ENCODE measurements at regions of chr1 and their contacts with region 1.

Region 1: GRCh38 chr1:184563308-184563707 is 176.5 kb downstream of the C1orf21 start:
- DNase-seq: no peak
- H3K4me3 ChIP-seq: no peak overlapping the region
- H3K27ac ChIP-seq: no peak overlapping the region
- H3K4me1 ChIP-seq: peaks cover 5% of the 10 kb centered on the region
- H3K27me3 ChIP-seq: no peaks in the 10 kb centered on the region
- CTCF ChIP-seq: peak in 2 of 3 donors; percentile 51 to 52
- EP300 ChIP-seq: no peak
- POLR2A ChIP-seq: no peak

Region 2: GRCh38 chr1:184075055-184076029 is 488.0 kb before region 1 on chr1:
- intact Hi-C with region 1: loop called in 3 of 4 experiments (anchors 10 kb)
- DNase-seq: peak in 3 of 5 donors; percentile 18 to 51 (median 19)
- H3K4me3 ChIP-seq: no peak overlapping the region
- H3K27ac ChIP-seq: peak overlapping the region in 1 of 2 donors; percentile 35
- H3K4me1 ChIP-seq: no peaks in the 10 kb centered on the region
- H3K27me3 ChIP-seq: no peaks in the 10 kb centered on the region
- CTCF ChIP-seq: peak; percentile 53 to 87 (median 84)
- EP300 ChIP-seq: no peak
- POLR2A ChIP-seq: no peak

Region 3: GRCh38 chr1:184386312-184387068 is 176.8 kb before region 1 on chr1 and contains the start of gene C1orf21:
- intact Hi-C with region 1: loop called in 3 of 4 experiments (anchors 5 to 10 kb)
- DNase-seq: peak; percentile 91 to 93 (median 92)
- H3K4me3 ChIP-seq: peak within 1 kb of the TSS; percentile 94
- H3K27ac ChIP-seq: peak within 1 kb of the TSS; percentile 69 to 84
- H3K4me1 ChIP-seq: peaks cover 3% of the 10 kb centered on the region
- H3K27me3 ChIP-seq: no peaks in the 10 kb centered on the region
- CTCF ChIP-seq: no peak
- EP300 ChIP-seq: no peak
- POLR2A ChIP-seq: peak; percentile 84
- total RNA-seq, gene C1orf21: 26.2 to 64.9 (median 59.4) TPM

Region 4: GRCh38 chr1:184664042-184664655 is 100.8 kb after region 1 on chr1:
- intact Hi-C with region 1: loop called in 2 of 4 experiments (anchors 5 to 10 kb)
- DNase-seq: peak; percentile 80 to 89 (median 85)
- H3K4me3 ChIP-seq: peak overlapping the region; percentile 21
- H3K27ac ChIP-seq: no peak overlapping the region
- H3K4me1 ChIP-seq: no peaks in the 10 kb centered on the region
- H3K27me3 ChIP-seq: no peaks in the 10 kb centered on the region
- CTCF ChIP-seq: peak; percentile 55 to 94 (median 90)
- EP300 ChIP-seq: no peak
- POLR2A ChIP-seq: no peak

Measured in ovary (tissue), 10 donors.